ENCODE measurements at regions of chr5 and their contacts with region 1.

Region 1: GRCh38 chr5:30581198-30581935 is 612.1 kb upstream of the CDH6 start:
- DNase-seq: peak; percentile 13
- ATAC-seq: peak; percentile 44; the same call in 1 of the 3 replicates
- H3K4me3 ChIP-seq: no peak overlapping the region
- H3K27ac ChIP-seq: no peak overlapping the region
- H3K4me1 ChIP-seq: peaks cover 5% of the 10 kb centered on the region
- H3K27me3 ChIP-seq: no peaks in the 10 kb centered on the region
- CTCF ChIP-seq: no peak
- EP300 ChIP-seq: no peak
- POLR2A ChIP-seq: no peak
- RAD21 ChIP-seq: no peak

Region 2: DNA sequence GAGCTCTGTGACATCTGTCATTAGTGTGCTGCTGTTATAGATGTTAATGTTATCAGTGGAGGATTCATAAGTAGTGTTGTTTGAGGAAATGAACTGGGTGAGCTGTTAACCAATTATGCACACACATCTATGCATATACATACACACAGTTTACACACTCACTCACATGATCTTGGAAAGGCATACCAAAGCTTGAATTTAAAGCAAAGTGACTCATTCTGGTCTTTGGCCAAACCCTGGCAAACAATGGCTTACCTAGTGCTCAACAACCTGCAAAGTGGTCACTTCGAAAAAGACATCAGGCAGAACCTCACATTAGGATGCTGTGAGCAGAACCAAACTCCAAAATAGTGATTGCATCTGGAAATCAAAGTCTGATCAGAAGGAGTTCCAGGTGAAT is 425.2 kb before region 1 on chr5:
- CTCF ChIA-PET with region 1: no interaction called
- POLR2A ChIA-PET with region 1: no interaction called
- in situ Hi-C with region 1: no loop called
- intact Hi-C with region 1: no loop called
- DNase-seq: no peak
- ATAC-seq: no peak
- H3K4me3 ChIP-seq: no peak overlapping the region
- H3K27ac ChIP-seq: no peak overlapping the region
- H3K4me1 ChIP-seq: no peaks in the 10 kb centered on the region
- H3K27me3 ChIP-seq: no peaks in the 10 kb centered on the region
- CTCF ChIP-seq: no peak
- EP300 ChIP-seq: no peak
- POLR2A ChIP-seq: no peak
- RAD21 ChIP-seq: no peak

Region 3: DNA sequence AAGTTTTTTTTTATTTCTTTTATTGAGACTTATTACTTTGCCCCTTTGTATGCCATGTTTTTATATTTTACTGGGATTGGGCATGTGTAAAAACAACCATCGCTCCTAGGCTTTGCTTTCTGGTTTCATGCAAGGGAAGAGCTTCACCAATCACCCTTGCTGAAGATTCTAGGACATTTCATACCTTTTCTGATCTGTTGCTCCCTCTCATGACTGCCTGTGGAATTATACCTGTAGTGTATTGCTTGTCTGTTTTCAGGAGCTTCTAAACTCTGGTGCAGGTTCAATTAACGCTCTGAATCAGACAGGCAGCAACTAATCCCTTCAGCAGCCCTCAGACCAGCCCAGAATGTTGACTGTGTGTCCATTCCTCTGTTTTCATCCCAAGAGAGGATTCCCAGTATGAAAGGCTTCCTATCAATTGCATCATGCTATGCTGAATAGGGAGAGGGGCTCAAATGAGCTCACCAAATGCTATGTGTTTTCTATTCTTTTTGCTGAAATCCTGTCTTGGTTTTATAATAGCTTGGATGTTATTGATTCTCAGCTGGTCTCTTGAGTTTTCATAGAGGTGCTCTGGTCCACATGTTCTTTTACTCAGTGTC is 39.2 kb after region 1 on chr5:
- CTCF ChIA-PET with region 1: no interaction called
- POLR2A ChIA-PET with region 1: interaction called, 4 read pairs
- in situ Hi-C with region 1: no loop called
- intact Hi-C with region 1: loop called (anchors 5 kb)
- DNase-seq: peak; percentile 50
- ATAC-seq: peak; percentile 89
- H3K4me3 ChIP-seq: no peak overlapping the region
- H3K27ac ChIP-seq: no peak overlapping the region
- H3K4me1 ChIP-seq: peaks cover 8% of the 10 kb centered on the region; the same call in 1 of the 2 replicates
- H3K27me3 ChIP-seq: no peaks in the 10 kb centered on the region
- CTCF ChIP-seq: peak; percentile 64
- EP300 ChIP-seq: no peak
- POLR2A ChIP-seq: no peak
- RAD21 ChIP-seq: peak; percentile 64

Region 4: GRCh38 chr5:30849931-30850710 is 268.8 kb after region 1 on chr5:
- CTCF ChIA-PET with region 1: no interaction called
- POLR2A ChIA-PET with region 1: no interaction called
- in situ Hi-C with region 1: no loop called
- intact Hi-C with region 1: no loop called
- DNase-seq: peak; percentile 28
- ATAC-seq: no peak
- H3K4me3 ChIP-seq: no peak overlapping the region
- H3K27ac ChIP-seq: no peak overlapping the region
- H3K4me1 ChIP-seq: no peaks in the 10 kb centered on the region
- H3K27me3 ChIP-seq: no peaks in the 10 kb centered on the region
- CTCF ChIP-seq: no peak
- EP300 ChIP-seq: no peak
- POLR2A ChIP-seq: no peak
- RAD21 ChIP-seq: no peak